ENCODE measurements at regions of chr2 and their contacts with region 1.

Region 1: GRCh38 chr2:85813982-85814801 is 60.4 kb downstream of the ATOH8 start:
- DNase-seq: peak; percentile 88
- H3K4me3 ChIP-seq: no peak overlapping the region
- H3K27ac ChIP-seq: no peak overlapping the region
- H3K4me1 ChIP-seq: no peaks in the 10 kb centered on the region
- H3K27me3 ChIP-seq: no peaks in the 10 kb centered on the region
- CTCF ChIP-seq: peak; percentile 94

Region 2: DNA sequence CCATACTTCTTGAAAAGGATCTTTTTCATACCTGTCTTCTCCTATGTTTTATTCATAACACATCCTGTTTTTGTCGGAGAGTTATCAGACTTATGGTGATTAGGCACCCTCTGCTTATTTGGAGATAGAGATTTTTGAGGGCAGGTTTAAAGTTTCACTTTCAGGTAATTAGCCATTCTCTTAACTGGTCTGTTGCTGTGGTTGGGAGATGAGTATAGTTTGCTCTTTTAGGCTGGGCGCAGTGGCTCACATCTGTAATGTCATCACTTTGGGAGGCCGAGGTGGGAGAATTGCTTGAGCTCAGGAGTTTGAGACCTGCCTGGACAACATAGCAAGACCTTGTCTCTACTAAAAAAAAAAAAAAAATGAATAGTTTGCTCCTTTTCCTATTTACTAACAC is 171.5 kb before region 1 on chr2:
- CTCF ChIA-PET with region 1: interaction called, 18 read pairs
- POLR2A ChIA-PET with region 1: no interaction called
- intact Hi-C with region 1: loop called (anchors 5 kb)
- DNase-seq: no peak
- H3K4me3 ChIP-seq: no peak overlapping the region
- H3K27ac ChIP-seq: no peak overlapping the region
- H3K4me1 ChIP-seq: no peaks in the 10 kb centered on the region
- H3K27me3 ChIP-seq: no peaks in the 10 kb centered on the region
- CTCF ChIP-seq: no peak

Region 3: GRCh38 chr2:85648619-85649018 is 165.6 kb before region 1 on chr2:
- CTCF ChIA-PET with region 1: interaction called, 5 read pairs
- POLR2A ChIA-PET with region 1: no interaction called
- intact Hi-C with region 1: loop called (anchors 5 kb)
- DNase-seq: peak; percentile 61
- H3K4me3 ChIP-seq: no peak overlapping the region
- H3K27ac ChIP-seq: no peak overlapping the region
- H3K4me1 ChIP-seq: no peaks in the 10 kb centered on the region
- H3K27me3 ChIP-seq: no peaks in the 10 kb centered on the region
- CTCF ChIP-seq: peak; percentile 46

Region 4: DNA sequence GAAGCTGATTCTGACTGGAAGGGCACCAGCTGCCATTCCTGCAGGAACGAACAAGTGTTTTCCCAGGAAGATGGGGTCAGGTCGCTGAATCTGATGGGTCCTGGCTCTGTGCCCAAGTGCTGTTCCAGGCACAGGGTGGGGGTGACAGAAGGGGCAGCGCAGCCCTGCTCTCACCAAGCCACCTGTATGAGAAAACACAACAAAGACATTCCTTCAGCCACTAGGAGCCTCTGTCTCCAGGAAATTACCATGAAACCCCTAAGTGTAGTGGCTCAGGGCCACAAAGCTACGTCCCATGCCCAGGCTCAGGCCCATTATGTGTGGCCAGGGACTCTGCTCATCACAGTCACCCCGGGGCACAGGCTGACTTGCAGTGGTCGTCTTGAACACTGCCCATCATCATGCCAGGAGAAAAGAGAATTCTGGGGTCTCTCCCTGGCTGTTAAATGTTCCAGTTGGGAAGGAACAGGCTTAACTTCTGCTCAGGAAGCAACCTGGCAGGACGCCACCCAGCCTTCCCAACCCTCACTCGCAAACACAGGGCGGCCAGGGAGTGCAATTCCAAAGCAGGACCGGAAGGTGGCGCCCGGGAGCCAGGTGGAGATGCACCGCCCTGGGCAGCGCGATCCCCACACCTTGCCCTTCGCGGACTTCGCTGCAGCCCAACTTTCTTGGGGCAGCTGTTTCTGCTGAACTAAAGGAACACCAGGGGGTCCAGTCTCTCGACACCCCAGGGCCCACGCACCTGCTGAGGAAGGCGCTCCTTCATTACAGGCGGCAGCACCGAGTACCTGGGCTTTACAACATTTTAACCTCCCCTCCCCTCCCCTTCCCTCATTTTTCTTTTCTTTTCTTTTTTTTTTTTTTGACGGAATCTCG is 135.2 kb before region 1 on chr2:
- CTCF ChIA-PET with region 1: no interaction called
- POLR2A ChIA-PET with region 1: no interaction called
- intact Hi-C with region 1: loop called (anchors 5 kb)
- DNase-seq: peak; percentile 87
- H3K4me3 ChIP-seq: no peak overlapping the region
- H3K27ac ChIP-seq: no peak overlapping the region
- H3K4me1 ChIP-seq: no peaks in the 10 kb centered on the region
- H3K27me3 ChIP-seq: no peaks in the 10 kb centered on the region
- CTCF ChIP-seq: peak; percentile 97

Region 5: GRCh38 chr2:85728883-85729824 is 85.0 kb before region 1 on chr2:
- CTCF ChIA-PET with region 1: interaction called, 34 read pairs
- POLR2A ChIA-PET with region 1: no interaction called
- intact Hi-C with region 1: loop called (anchors 1 kb)
- DNase-seq: peak; percentile 85
- H3K4me3 ChIP-seq: no peak overlapping the region
- H3K27ac ChIP-seq: no peak overlapping the region
- H3K4me1 ChIP-seq: no peaks in the 10 kb centered on the region
- H3K27me3 ChIP-seq: no peaks in the 10 kb centered on the region
- CTCF ChIP-seq: peak; percentile 97

Region 6: DNA sequence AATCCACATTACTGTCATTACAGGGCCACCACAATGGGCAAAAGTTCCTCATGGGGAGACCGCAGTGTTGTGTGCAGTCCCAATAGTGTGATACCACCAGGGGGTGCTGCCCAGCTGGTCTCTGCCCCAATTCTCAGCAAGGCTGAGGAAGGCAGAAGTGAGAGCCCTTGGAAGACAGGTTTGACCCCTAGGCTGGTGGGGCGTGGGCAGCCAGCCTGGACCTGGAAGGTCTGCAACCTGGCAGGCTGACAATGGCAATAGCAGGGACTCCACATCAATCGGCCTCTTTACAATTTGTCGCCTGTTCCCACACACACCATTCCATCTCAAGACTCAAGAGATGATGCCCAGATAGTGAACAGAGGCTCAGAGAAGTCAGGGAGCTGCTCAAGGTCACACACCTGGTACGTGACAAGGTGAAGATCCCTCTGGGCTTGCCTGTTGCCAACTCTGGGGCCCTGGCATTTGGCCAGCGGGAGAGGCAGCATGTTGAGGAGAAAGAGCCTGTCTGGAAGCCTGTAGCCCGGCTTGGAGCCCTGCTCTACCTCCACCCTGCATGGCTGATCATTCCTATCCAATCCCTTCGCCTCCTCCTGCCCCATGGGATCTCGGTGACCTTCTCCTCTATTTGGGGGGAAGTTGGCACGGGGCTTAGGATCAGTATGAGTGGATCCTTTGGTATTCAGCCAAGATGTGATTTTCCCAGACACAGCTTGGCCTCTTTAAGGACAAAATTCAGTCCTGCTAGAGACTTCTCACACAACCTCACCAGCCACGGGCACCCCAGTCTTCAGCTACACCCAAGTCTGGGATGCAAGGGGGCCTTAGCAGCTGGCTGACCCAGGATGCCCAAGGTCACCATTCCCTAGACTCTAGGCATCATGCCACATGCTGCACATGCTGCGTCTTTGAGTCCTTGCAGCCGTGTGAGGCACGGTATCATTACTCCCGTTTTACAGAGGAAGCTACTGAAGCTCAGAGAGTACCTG is 63.3 kb before region 1 on chr2:
- CTCF ChIA-PET with region 1: interaction called, 30 read pairs
- POLR2A ChIA-PET with region 1: no interaction called
- intact Hi-C with region 1: loop called (anchors 1 kb)
- DNase-seq: peak; percentile 68
- H3K4me3 ChIP-seq: no peak overlapping the region
- H3K27ac ChIP-seq: no peak overlapping the region
- H3K4me1 ChIP-seq: peaks cover 29% of the 10 kb centered on the region
- H3K27me3 ChIP-seq: no peaks in the 10 kb centered on the region
- CTCF ChIP-seq: peak; percentile 93

Region 7: GRCh38 chr2:85792783-85793441 is 21.3 kb before region 1 on chr2:
- CTCF ChIA-PET with region 1: no interaction called
- POLR2A ChIA-PET with region 1: no interaction called
- intact Hi-C with region 1: no loop called
- DNase-seq: peak; percentile 40
- H3K4me3 ChIP-seq: no peak overlapping the region
- H3K27ac ChIP-seq: no peak overlapping the region
- H3K4me1 ChIP-seq: peaks cover 8% of the 10 kb centered on the region
- H3K27me3 ChIP-seq: no peaks in the 10 kb centered on the region
- CTCF ChIP-seq: no peak

Region 8: GRCh38 chr2:86003967-86004366 is 189.8 kb after region 1 on chr2:
- CTCF ChIA-PET with region 1: no interaction called
- POLR2A ChIA-PET with region 1: no interaction called
- intact Hi-C with region 1: no loop called
- DNase-seq: no peak
- H3K4me3 ChIP-seq: no peak overlapping the region
- H3K27ac ChIP-seq: no peak overlapping the region
- H3K4me1 ChIP-seq: peaks cover 16% of the 10 kb centered on the region
- H3K27me3 ChIP-seq: no peaks in the 10 kb centered on the region
- CTCF ChIP-seq: no peak

Region 9: DNA sequence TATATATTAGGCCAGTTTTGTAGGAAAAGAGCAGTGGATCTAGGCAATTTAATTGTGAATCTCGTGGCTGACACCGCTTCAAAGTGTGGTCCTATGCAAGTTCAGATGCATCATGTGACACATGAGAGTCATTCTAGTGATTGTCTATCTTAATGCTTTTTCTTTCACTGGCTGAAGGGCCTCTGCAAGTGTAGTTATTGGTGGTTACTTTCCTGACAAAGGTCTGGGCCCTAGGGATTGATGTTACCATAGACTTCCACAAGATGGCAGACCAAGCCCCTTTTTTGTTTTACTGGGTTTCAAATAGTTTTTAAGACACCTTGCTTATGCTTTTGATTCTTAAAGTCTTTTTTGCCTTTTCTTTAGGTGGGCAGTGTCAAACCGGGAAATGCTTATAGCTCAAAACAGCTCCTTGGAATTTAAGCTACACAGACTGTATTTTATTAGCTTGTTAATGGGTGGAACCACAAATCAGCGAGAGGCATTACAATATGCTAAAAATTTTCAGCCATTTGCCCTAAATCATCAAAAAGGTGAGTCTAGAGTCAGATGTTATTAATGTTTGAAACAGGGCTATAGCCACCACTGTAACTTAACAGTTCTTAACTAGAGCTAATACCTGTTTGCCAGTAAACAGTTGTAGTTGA is 950.6 kb after region 1 on chr2:
- CTCF ChIA-PET with region 1: no interaction called
- POLR2A ChIA-PET with region 1: no interaction called
- intact Hi-C with region 1: no loop called
- DNase-seq: peak; percentile 62
- H3K4me3 ChIP-seq: no peak overlapping the region
- H3K27ac ChIP-seq: no peak overlapping the region
- H3K4me1 ChIP-seq: no peaks in the 10 kb centered on the region
- H3K27me3 ChIP-seq: no peaks in the 10 kb centered on the region
- CTCF ChIP-seq: peak; percentile 69